ENCODE measurements at regions of chr1 and their contacts with region 1.

Region 1: DNA sequence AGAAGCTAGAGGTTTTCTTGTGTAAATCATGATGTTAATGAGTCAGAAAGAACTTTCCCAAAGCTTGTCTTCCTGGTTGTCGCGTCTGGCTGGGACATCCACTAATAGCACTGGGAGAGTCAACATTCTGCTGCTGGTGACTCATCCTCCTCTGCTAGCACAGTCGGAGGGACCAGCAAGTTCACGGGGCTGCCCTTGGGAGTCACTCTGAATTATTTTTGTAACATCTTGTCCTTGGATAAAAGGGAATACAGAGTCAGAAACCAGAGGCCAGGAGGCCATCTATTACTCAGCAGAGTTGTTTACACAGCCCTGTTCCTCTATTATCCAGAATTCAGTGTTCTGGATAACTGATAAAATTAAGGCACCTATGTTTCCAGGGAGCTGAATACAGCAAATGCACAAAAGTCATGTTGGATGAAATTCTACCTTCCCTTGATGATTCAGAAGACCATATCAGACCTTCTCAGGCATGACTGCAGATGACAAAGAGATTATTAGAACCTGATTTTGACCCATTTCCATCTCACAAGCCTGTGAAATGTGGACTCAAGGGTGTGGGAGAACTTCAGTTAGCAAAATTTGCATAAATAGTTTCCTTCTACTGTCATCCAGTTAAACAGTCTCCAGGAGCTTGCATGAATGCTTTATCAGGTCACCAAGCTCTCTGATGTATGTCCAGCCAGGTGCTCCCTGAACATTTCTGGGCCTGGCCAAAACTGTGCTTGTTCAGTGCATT is 68.1 kb downstream of the JAK1 start:
- DNase-seq: no peak
- ATAC-seq: peak; percentile 66
- H3K4me3 ChIP-seq: 0 out of 2 replicates have a peak overlapping the region, but pooled peaks have one; percentile 28
- H3K27ac ChIP-seq: peak overlapping the region; percentile 82
- H3K4me1 ChIP-seq: peaks cover 47% of the 10 kb centered on the region
- H3K27me3 ChIP-seq: no peaks in the 10 kb centered on the region
- CTCF ChIP-seq: no peak
- EP300 ChIP-seq: no peak
- POLR2A ChIP-seq: no peak
- RAD21 ChIP-seq: no peak

Region 2: GRCh38 chr1:64711266-64711665 is 187.0 kb before region 1 on chr1:
- CTCF ChIA-PET with region 1: no interaction called
- POLR2A ChIA-PET with region 1: no interaction called
- RAD21 ChIA-PET with region 1: no interaction called
- SMC1A ChIA-PET with region 1: no interaction called
- in situ Hi-C with region 1: no loop called
- intact Hi-C with region 1: no loop called
- DNase-seq: no peak
- ATAC-seq: no peak
- H3K4me3 ChIP-seq: no peak overlapping the region
- H3K27ac ChIP-seq: no peak overlapping the region
- H3K4me1 ChIP-seq: no peaks in the 10 kb centered on the region
- H3K27me3 ChIP-seq: no peaks in the 10 kb centered on the region
- CTCF ChIP-seq: no peak
- EP300 ChIP-seq: no peak
- POLR2A ChIP-seq: no peak
- RAD21 ChIP-seq: no peak

Region 3: DNA sequence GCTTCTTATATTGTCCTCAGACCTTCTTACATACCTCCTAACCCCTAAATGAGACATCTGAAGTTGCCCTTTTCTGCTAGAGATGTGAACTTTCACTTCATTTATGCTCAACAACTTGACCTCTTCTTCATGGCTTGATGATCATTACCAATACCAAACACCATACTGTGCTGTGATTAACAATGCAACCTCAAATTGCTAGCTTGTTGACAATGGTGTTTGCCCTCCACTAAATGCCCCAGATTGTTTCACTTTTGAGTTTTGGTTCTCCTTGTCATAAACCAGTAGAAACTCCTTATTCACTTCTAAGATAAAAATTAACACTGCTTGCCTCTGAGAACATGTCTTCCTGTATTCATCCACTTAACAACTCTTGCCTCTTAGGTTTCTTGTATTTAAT is 62.5 kb after region 1 on chr1:
- CTCF ChIA-PET with region 1: no interaction called
- POLR2A ChIA-PET with region 1: interaction called, 3 read pairs
- RAD21 ChIA-PET with region 1: interaction called, 3 read pairs
- SMC1A ChIA-PET with region 1: interaction called, 24 read pairs
- in situ Hi-C with region 1: loop called (anchors 5 kb)
- intact Hi-C with region 1: loop called (anchors 2 kb)
- DNase-seq: peak; percentile 85
- ATAC-seq: peak; percentile 79
- H3K4me3 ChIP-seq: peak overlapping the region; percentile 41
- H3K27ac ChIP-seq: peak overlapping the region; percentile 43
- H3K4me1 ChIP-seq: peaks cover 54% of the 10 kb centered on the region
- H3K27me3 ChIP-seq: no peaks in the 10 kb centered on the region
- CTCF ChIP-seq: no peak
- EP300 ChIP-seq: peak in 1 of 2 experiments; percentile 59; a peak in 1 of 4 replicates
- POLR2A ChIP-seq: no peak
- RAD21 ChIP-seq: no peak